ENCODE measurements at regions of chr18 and their contacts with region 1.

Region 1: GRCh38 chr18:36672437-36673344 is 156.1 kb downstream of the TPGS2 start:
- DNase-seq: no peak
- ATAC-seq: peak; percentile 88
- H3K4me3 ChIP-seq: no peak overlapping the region
- H3K27ac ChIP-seq: no peak overlapping the region
- H3K4me1 ChIP-seq: 0 out of 2 replicates have a peak, but pooled peaks cover 7% of the 10 kb centered on the region
- H3K27me3 ChIP-seq: no peaks in the 10 kb centered on the region
- CTCF ChIP-seq: no peak
- EP300 ChIP-seq: no peak
- POLR2A ChIP-seq: no peak
- RAD21 ChIP-seq: no peak

Region 2: GRCh38 chr18:36284671-36285295 is 387.9 kb before region 1 on chr18:
- CTCF ChIA-PET with region 1: no interaction called
- POLR2A ChIA-PET with region 1: no interaction called
- RAD21 ChIA-PET with region 1: no interaction called
- SMC1A ChIA-PET with region 1: no interaction called
- in situ Hi-C with region 1: no loop called
- intact Hi-C with region 1: no loop called
- DNase-seq: peak; percentile 40
- ATAC-seq: peak; percentile 83
- H3K4me3 ChIP-seq: no peak overlapping the region
- H3K27ac ChIP-seq: no peak overlapping the region
- H3K4me1 ChIP-seq: no peaks in the 10 kb centered on the region
- H3K27me3 ChIP-seq: peaks cover 0 to 2% of the 10 kb centered on the region in 2 experiments; a peak in 2 of 4 replicates
- CTCF ChIP-seq: peak; percentile 76 to 92 (median 83)
- EP300 ChIP-seq: no peak
- POLR2A ChIP-seq: no peak
- RAD21 ChIP-seq: peak; percentile 99

Region 3: GRCh38 chr18:36403896-36404820 is 268.5 kb before region 1 on chr18:
- CTCF ChIA-PET with region 1: no interaction called
- POLR2A ChIA-PET with region 1: no interaction called
- RAD21 ChIA-PET with region 1: no interaction called
- SMC1A ChIA-PET with region 1: no interaction called
- in situ Hi-C with region 1: no loop called
- intact Hi-C with region 1: no loop called
- DNase-seq: no peak
- ATAC-seq: no peak; the same call in 2 of the 3 replicates
- H3K4me3 ChIP-seq: no peak overlapping the region
- H3K27ac ChIP-seq: no peak overlapping the region
- H3K4me1 ChIP-seq: no peaks in the 10 kb centered on the region
- H3K27me3 ChIP-seq: no peaks in the 10 kb centered on the region
- CTCF ChIP-seq: no peak
- EP300 ChIP-seq: no peak
- POLR2A ChIP-seq: no peak
- RAD21 ChIP-seq: no peak

Region 4: GRCh38 chr18:36655930-36656329 is 16.8 kb before region 1 on chr18:
- CTCF ChIA-PET with region 1: interaction called, 5 read pairs
- POLR2A ChIA-PET with region 1: no interaction called
- RAD21 ChIA-PET with region 1: interaction called, 4 read pairs
- SMC1A ChIA-PET with region 1: interaction called, 15 read pairs
- in situ Hi-C with region 1: no loop called
- intact Hi-C with region 1: no loop called
- DNase-seq: no peak
- ATAC-seq: no peak
- H3K4me3 ChIP-seq: no peak overlapping the region
- H3K27ac ChIP-seq: no peak overlapping the region
- H3K4me1 ChIP-seq: no peaks in the 10 kb centered on the region
- H3K27me3 ChIP-seq: no peaks in the 10 kb centered on the region
- CTCF ChIP-seq: no peak
- EP300 ChIP-seq: no peak
- POLR2A ChIP-seq: no peak
- RAD21 ChIP-seq: no peak